GM23248 (cell line): ENCODE measurements at regions of chr11 and their contacts with region 1.

Region 1: GRCh38 chr11:95835768-95836488 is 45.6 kb downstream of the CEP57 start:
- DNase-seq: peak; percentile 94
- H3K4me3 ChIP-seq: no peak overlapping the region
- H3K27ac ChIP-seq: peak overlapping the region; percentile 49
- H3K4me1 ChIP-seq: peaks cover 27% of the 10 kb centered on the region
- H3K27me3 ChIP-seq: no peaks in the 10 kb centered on the region

Region 2: DNA sequence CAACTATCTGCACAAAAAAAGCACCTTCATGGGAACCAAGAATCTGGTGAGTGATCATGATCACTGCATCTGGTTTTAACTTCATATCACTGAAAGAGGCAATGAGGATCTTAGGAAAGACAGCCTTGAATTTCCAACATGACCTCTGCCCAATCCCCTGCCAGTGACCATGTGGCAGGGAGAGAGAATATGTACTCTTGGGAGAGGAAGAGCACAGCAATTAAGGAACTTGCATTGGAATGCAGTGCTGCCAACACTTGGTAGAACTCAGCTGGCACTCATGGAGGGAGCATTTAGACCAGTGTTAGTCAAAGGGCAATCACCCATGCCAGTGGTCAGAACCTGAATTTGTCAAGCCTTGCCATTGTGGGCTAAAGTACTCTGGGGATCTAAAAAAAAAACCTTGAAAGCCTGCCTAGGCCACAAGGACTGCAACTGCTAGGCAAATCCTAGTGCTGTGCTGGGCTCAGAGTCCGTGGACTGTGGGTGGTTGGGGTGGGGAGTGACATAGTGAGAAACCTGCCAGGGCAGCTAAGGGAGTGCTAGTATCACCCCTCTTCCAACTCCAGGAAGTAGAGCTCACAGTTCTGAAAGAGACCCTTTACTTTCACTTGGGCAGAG is 576.9 kb after region 1 on chr11:
- in situ Hi-C with region 1: loop called (anchors 10 kb)
- DNase-seq: no peak
- H3K4me3 ChIP-seq: no peak overlapping the region
- H3K27ac ChIP-seq: no peak overlapping the region
- H3K4me1 ChIP-seq: no peaks in the 10 kb centered on the region
- H3K27me3 ChIP-seq: no peaks in the 10 kb centered on the region